H1 (cell line): ENCODE measurements at regions of chr2 and their contacts with region 1.

Region 1: GRCh38 chr2:3575534-3576262 is 638 bp downstream of the RPS7 start:
- DNase-seq: no peak
- H3K4me3 ChIP-seq: peak overlapping the region; percentile 88 to 100 (median 94)
- H3K27ac ChIP-seq: peak overlapping the region; percentile 74
- H3K4me1 ChIP-seq: peaks cover 0 to 4% (median 2%) of the 10 kb centered on the region in 4 experiments; a peak in 2 of 7 replicates
- H3K27me3 ChIP-seq: no peaks in the 10 kb centered on the region
- CTCF ChIP-seq: no peak
- EP300 ChIP-seq: no peak
- POLR2A ChIP-seq: no peak; a peak in 1 of 3 replicates
- RAD21 ChIP-seq: no peak

Region 2: GRCh38 chr2:3594493-3595281 is 19.0 kb after region 1 on chr2 and contains the start of gene COLEC11:
- CTCF ChIA-PET with region 1: interaction called, 3 read pairs
- POLR2A ChIA-PET with region 1: interaction called, 77 read pairs
- DNase-seq: peak in 1 of 2 experiments; percentile 62
- H3K4me3 ChIP-seq: no peak within 1 kb of the TSS
- H3K27ac ChIP-seq: no peak within 1 kb of the TSS
- H3K4me1 ChIP-seq: no peaks in the 10 kb centered on the region
- H3K27me3 ChIP-seq: no peaks in the 10 kb centered on the region
- CTCF ChIP-seq: peak; percentile 19 to 37 (median 23); a peak in 2 of 4 replicates
- EP300 ChIP-seq: no peak
- POLR2A ChIP-seq: no peak
- RAD21 ChIP-seq: peak; percentile 36 to 47; a peak in 3 of 4 replicates
- total RNA-seq, gene COLEC11: 0.25 and 0.47 TPM in 2 replicates

Region 3: DNA sequence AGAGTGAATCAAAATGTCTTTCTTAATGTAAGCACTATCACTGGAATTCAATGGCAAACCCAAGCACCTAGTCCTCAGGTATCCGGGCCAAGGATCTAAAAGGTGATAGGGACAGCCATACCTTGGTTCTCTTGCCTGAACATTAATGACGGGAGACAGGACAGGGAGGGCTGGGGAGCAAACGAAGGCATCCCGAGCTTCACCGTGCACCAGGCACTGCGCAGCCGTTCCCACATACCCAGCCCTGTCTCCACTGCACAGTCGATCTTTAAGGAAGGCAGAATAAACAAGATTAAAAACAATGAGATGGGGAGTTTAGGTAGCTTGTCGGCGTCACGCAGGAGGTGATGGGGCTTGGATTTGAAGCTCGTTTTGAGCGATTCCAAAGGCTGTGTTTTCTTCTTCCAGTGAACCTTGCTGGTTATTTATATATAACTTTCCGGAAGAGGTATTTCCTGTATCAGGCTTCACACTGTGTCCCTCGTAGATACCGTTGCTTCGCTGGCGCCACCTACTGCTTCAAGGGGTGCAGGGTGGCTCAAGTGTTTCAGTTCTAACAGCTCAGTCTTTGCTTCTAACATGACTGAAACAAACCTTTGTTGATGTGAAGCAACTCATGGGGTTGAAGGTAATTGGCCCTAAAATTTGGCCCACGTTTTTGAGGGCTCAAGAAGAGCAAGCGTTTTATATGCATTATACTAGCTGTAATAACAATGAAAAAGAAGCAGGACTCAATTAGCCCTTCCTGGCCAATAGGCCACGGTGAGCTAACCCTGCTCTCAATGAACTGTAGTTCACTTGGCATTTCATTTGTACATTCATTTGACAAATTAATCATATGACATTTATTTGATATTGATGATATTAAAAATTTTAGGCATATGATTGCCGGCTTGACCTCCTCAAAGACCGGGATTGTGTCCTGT is 205.0 kb after region 1 on chr2:
- CTCF ChIA-PET with region 1: no interaction called
- POLR2A ChIA-PET with region 1: no interaction called
- DNase-seq: peak in 1 of 2 experiments; percentile 72
- H3K4me3 ChIP-seq: no peak overlapping the region
- H3K27ac ChIP-seq: no peak overlapping the region
- H3K4me1 ChIP-seq: peaks cover 0 to 9% (median 4%) of the 10 kb centered on the region in 4 experiments; a peak in 3 of 7 replicates
- H3K27me3 ChIP-seq: no peaks in the 10 kb centered on the region
- CTCF ChIP-seq: peak; percentile 73 to 85 (median 81)
- EP300 ChIP-seq: no peak
- POLR2A ChIP-seq: no peak
- RAD21 ChIP-seq: peak; percentile 67 to 74